ENCODE measurements at regions of chr1 and their contacts with region 1.

Region 1: GRCh38 chr1:100351095-100351891 is 1.0 kb upstream of the CDC14A start:
- DNase-seq: peak; percentile 92
- H3K4me3 Mint-ChIP-seq: peak overlapping the region; percentile 94
- H3K27ac Mint-ChIP-seq: peak overlapping the region; percentile 97
- H3K4me1 Mint-ChIP-seq: peaks cover 29% of the 10 kb centered on the region
- H3K27me3 Mint-ChIP-seq: no peaks in the 10 kb centered on the region

Region 2: GRCh38 chr1:99808391-99809115 is 542.7 kb before region 1 on chr1:
- CTCF ChIA-PET with region 1: no interaction called
- intact Hi-C with region 1: loop called (anchors 2 kb)
- DNase-seq: peak; percentile 53
- H3K4me3 Mint-ChIP-seq: no peak overlapping the region
- H3K27ac Mint-ChIP-seq: no peak overlapping the region
- H3K4me1 Mint-ChIP-seq: peaks cover 8% of the 10 kb centered on the region
- H3K27me3 Mint-ChIP-seq: peaks cover 2% of the 10 kb centered on the region

Region 3: DNA sequence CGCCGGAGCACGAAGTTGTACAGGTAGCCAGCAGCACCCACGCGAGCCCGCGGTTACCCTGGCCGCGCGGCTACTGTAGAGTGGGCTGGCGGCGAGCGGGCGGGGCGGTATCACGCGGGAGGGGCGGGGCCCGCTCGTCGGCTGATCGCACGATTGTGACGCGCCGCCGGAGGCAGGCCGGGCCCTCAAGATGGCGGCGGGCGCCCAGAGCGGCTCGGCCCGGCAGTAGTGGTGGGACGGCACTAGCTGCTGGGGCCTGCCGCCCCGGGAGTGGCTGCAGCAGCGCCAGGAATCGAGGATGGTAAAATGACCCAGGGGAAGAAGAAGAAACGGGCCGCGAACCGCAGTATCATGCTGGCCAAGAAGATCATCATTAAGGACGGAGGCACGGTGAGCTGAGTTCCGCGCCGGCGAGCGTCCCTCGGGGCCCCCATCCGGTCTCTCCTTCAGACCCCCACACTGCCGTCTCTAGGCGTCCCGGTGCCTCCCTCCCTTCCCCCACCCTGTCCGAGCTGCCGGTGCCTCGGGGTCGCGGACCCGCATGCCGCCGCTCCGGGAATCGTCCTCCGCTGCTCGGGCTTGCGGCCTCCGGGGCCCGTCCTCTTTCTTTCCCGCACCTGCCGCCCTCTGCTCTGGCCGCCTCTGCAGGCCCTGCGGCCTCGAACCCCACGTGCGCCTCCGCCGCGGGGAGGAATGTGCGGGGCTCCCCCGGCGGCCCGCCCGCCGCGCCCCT is 313.2 kb before region 1 on chr1:
- CTCF ChIA-PET with region 1: no interaction called
- intact Hi-C with region 1: loop called (anchors 1 kb)
- DNase-seq: peak; percentile 89
- H3K4me3 Mint-ChIP-seq: peak overlapping the region; percentile 95
- H3K27ac Mint-ChIP-seq: peak overlapping the region; percentile 99
- H3K4me1 Mint-ChIP-seq: peaks cover 54% of the 10 kb centered on the region
- H3K27me3 Mint-ChIP-seq: no peaks in the 10 kb centered on the region

Region 4: DNA sequence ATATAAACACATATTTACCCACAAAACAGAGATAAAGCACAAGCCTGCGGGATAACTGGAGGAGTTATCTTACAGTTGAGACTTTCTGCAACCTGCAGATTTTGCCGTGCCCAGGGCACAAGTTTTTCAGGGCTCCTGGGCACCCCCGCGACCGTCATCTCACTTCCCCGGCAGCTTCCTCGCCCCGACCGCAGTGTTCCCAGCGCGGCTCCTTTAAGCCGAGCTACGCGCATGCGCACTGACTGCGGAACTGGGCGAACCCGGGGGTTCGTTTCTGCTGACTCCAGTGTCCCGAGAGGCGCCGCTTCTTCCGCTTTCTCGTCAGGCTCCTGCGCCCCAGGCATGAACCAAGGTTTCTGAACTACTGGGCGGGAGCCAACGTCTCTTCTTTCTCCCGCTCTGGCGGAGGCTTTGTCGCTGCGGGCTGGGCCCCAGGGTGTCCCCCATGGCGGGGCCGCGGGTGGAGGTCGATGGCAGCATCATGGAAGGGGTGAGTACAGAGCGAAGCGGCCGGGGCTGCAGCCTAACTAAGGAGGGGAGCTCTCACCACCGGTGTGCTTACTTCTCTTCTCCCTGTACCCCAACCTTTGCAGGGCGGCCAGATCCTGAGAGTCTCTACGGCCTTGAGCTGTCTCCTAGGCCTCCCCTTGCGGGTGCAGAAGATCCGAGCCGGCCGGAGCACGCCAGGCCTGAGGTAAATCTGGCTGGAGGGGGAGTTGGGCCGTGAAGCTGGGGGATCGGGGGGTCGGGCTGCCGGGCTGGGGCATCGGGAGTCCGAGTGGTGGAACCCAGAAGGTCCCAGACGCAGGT is 85.2 kb before region 1 on chr1 and contains the start of gene RTCA:
- CTCF ChIA-PET with region 1: interaction called, 7 read pairs
- intact Hi-C with region 1: loop called (anchors 1 kb)
- DNase-seq: peak; percentile 96
- H3K4me3 Mint-ChIP-seq: peak within 1 kb of the TSS; percentile 100
- H3K27ac Mint-ChIP-seq: peak within 1 kb of the TSS; percentile 96
- H3K4me1 Mint-ChIP-seq: peaks cover 35% of the 10 kb centered on the region
- H3K27me3 Mint-ChIP-seq: no peaks in the 10 kb centered on the region
- total RNA-seq, gene RTCA: 36.7 to 37.5 TPM

Region 5: GRCh38 chr1:100377590-100378361 is 26.5 kb after region 1 on chr1:
- CTCF ChIA-PET with region 1: no interaction called
- intact Hi-C with region 1: loop called (anchors 1 kb)
- DNase-seq: no peak
- H3K4me3 Mint-ChIP-seq: no peak overlapping the region
- H3K27ac Mint-ChIP-seq: peak overlapping the region; percentile 71
- H3K4me1 Mint-ChIP-seq: peaks cover 60% of the 10 kb centered on the region
- H3K27me3 Mint-ChIP-seq: no peaks in the 10 kb centered on the region

Region 6: GRCh38 chr1:100423832-100424337 is 72.6 kb after region 1 on chr1:
- CTCF ChIA-PET with region 1: interaction called, 5 read pairs
- intact Hi-C with region 1: loop called (anchors 1 kb)
- DNase-seq: no peak
- H3K4me3 Mint-ChIP-seq: peak overlapping the region; percentile 36
- H3K27ac Mint-ChIP-seq: peak overlapping the region; percentile 59
- H3K4me1 Mint-ChIP-seq: peaks cover 63% of the 10 kb centered on the region
- H3K27me3 Mint-ChIP-seq: no peaks in the 10 kb centered on the region

Region 7: DNA sequence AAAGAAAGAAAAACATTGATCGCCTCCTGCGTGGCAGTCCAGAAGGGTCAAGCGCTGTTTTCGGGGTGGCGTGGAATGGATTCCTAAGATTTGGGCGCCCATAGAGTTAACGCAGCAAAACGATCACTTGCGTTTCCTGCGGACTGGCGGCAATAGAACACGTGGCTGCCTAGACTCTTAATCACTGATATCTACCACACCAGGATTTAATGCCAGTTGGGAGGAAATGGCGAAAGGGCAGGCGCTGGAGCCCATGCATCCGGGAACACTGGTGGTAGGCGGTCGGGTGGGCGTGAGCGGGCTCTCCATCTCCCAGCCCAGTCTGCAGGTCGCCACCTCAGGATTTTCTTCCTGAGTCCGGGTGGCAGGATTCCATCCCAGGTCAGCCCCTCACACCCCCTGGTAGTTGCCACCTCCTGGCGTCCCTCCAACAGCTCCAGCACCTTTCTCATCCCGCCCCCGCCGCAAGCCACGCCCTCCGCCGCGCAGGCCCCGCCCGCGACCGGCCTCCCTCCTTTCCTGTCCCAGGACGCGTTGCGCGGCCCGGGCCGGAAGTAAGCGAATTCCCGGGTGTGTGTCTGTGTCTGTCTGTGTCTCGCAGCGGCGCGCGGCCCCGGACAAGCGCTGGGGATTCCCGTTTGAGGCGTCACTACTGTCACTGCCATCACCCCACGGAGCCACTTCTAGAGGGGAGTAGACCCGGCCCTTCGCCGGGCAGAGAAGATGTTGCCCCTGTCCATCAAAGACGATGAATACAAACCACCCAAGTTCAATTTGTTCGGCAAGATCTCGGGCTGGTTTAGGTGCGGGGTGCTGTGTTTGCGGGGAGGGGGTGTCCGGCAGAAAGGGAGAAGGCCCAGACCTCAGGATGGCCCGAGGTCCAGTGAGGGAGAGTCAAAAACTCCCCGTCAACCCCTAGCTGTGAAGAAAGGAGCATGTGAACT is 544.5 kb after region 1 on chr1 and contains the start of gene SLC30A7:
- CTCF ChIA-PET with region 1: no interaction called
- intact Hi-C with region 1: loop called (anchors 1 kb)
- DNase-seq: peak; percentile 98
- H3K4me3 Mint-ChIP-seq: peak within 1 kb of the TSS; percentile 100
- H3K27ac Mint-ChIP-seq: peak within 1 kb of the TSS; percentile 100
- H3K4me1 Mint-ChIP-seq: peaks cover 37% of the 10 kb centered on the region
- H3K27me3 Mint-ChIP-seq: no peaks in the 10 kb centered on the region
- total RNA-seq, gene SLC30A7: 32.4 to 32.6 TPM